PC-9 (cell line): ENCODE measurements at regions of chr1 and their contacts with region 1.

Region 1: DNA sequence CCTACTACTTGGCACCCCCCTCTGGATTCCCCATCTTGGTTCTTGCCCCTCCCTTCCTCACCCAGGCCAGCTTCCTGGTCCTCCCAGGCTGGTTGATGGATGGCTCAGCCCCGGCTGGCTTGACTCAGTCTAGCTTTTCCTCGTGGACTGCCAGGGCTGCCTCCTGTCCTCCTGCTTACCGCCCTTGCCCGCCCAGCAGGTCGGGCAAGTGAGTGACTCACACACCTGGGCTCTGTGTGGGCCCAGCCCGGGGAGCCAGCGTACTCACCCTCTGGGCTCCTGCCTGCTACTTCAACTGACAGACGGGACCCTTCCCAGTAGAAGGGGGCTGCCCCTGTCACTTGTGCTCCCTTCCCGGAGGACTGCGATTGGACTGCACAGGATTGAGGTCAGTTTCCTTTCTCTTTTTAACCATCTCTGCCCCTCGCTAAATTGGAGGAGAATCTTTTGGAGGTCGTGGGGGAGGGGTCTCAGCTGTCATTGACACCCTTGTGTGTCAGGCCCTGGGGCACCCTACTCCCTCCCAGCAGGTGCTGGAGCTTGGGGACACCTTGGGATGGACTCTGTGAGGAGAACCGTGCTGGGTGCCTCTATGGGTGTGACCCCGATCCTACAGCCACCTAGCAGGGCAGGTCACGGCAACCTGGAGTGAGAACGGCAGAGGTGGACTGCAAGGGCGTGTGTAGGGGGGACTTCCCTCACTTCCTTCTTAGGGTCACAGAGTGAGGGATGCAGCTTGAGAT is 19.3 kb upstream of the ARHGEF10L start:
- DNase-seq: peak; percentile 88 to 90
- H3K4me3 ChIP-seq: peak overlapping the region; percentile 54; the same call in 1 of the 2 replicates
- H3K27ac ChIP-seq: peak overlapping the region; percentile 62
- H3K4me1 ChIP-seq: peaks cover 43% of the 10 kb centered on the region
- H3K27me3 ChIP-seq: no peaks in the 10 kb centered on the region
- CTCF ChIP-seq: no peak

Region 2: DNA sequence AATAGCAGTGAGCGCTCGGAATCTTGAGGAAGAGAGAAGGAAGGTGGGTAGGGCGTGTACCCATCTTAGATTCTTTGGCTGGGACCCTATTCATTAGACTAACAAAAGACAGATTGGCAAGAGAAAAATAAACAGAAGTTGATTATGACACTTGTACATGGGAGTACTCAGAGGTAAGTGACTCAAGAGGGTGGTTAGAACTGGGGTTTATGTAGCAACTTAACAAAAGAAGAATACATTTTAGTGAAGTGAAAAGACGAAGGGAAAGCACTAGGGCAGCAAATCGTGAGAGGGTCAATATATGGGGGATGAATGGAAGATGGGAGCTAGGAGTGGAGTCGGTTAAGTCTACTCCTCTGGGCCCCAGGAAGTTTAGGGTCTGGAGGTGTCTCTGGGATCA is 55.0 kb before region 1 on chr1:
- CTCF ChIA-PET with region 1: no interaction called
- POLR2A ChIA-PET with region 1: no interaction called
- intact Hi-C with region 1: no loop called
- DNase-seq: no peak
- H3K4me3 ChIP-seq: no peak overlapping the region
- H3K27ac ChIP-seq: no peak overlapping the region
- H3K4me1 ChIP-seq: peaks cover 6% of the 10 kb centered on the region; the same call in 1 of the 2 replicates
- H3K27me3 ChIP-seq: no peaks in the 10 kb centered on the region
- CTCF ChIP-seq: no peak

Region 3: DNA sequence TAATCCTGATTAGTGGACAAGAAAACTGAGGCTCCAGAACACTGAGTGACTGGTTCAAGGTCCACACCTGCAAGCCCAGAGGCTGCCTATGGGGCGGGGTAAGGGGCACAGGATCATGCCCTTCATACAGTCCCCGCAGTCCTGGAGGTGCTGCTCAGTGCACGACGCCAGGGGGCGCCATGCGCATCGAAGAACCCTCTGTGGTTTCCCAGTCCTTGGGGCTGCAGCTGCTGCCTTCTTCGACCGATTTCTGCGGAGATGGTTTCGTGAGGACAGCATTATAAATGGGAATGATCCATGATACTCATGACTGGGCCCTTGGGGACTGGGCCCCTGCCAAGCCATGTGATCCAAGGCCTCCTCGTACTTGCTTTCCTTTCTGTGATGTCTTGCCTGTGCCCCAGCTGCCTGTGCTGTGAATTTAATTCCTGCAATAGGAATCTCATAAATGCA is 17.9 kb before region 1 on chr1:
- CTCF ChIA-PET with region 1: no interaction called
- POLR2A ChIA-PET with region 1: no interaction called
- intact Hi-C with region 1: no loop called
- DNase-seq: peak; percentile 54 to 79
- H3K4me3 ChIP-seq: no peak overlapping the region
- H3K27ac ChIP-seq: no peak overlapping the region
- H3K4me1 ChIP-seq: 0 out of 2 replicates have a peak, but pooled peaks cover 7% of the 10 kb centered on the region
- H3K27me3 ChIP-seq: no peaks in the 10 kb centered on the region
- CTCF ChIP-seq: peak; percentile 81

Region 4: DNA sequence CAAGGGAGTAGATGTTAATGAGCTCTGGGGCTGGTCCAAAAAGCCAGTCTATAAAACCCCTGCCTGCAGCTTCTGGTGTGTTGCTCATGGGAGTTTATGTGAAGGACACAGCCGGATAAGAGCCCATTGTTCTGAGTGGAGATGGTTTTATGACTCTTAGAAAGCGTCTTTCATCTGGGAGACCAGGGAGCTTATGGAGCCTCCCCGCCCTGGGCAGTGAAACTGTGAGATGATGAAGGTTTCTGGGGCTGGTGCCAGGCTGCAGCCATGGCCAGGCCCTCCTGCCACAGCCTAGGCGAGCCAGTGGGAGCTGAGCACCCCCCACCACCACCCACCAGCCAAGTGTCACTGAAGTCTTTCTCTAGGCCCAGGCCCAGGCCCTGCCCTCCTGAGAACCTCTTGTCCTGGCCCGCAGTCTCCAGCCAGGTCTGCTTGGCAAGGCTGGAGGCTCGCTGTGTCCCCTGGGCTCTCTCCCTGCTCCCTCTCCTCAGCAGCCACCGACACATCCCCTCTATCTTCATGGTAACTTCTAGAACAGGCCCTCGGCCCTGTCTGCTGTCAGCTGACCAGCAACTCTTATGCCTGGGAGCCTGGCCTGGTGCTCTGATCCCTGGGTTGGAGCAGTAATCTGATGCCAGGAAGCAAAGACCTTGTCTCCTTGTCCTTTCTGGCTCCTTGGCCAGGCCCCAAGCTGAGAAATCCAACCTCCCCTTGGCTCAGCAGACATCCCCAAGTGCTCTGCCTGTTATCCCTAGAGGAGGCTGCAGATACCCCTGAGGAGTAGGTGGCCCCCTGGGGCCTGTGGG is 11.6 kb after region 1 on chr1:
- CTCF ChIA-PET with region 1: no interaction called
- POLR2A ChIA-PET with region 1: no interaction called
- intact Hi-C with region 1: loop called (anchors 1 kb)
- DNase-seq: no peak
- H3K4me3 ChIP-seq: no peak overlapping the region
- H3K27ac ChIP-seq: no peak overlapping the region
- H3K4me1 ChIP-seq: peaks cover 9% of the 10 kb centered on the region
- H3K27me3 ChIP-seq: no peaks in the 10 kb centered on the region
- CTCF ChIP-seq: no peak

Region 5: GRCh38 chr1:17551755-17552234 is 31.6 kb after region 1 on chr1:
- CTCF ChIA-PET with region 1: interaction called, 3 read pairs
- POLR2A ChIA-PET with region 1: no interaction called
- intact Hi-C with region 1: loop called (anchors 1 kb)
- DNase-seq: peak in 1 of 2 experiments; percentile 63
- H3K4me3 ChIP-seq: no peak overlapping the region; the same call in 1 of the 2 replicates
- H3K27ac ChIP-seq: peak overlapping the region; percentile 95
- H3K4me1 ChIP-seq: peaks cover 56% of the 10 kb centered on the region
- H3K27me3 ChIP-seq: no peaks in the 10 kb centered on the region
- CTCF ChIP-seq: no peak

Region 6: DNA sequence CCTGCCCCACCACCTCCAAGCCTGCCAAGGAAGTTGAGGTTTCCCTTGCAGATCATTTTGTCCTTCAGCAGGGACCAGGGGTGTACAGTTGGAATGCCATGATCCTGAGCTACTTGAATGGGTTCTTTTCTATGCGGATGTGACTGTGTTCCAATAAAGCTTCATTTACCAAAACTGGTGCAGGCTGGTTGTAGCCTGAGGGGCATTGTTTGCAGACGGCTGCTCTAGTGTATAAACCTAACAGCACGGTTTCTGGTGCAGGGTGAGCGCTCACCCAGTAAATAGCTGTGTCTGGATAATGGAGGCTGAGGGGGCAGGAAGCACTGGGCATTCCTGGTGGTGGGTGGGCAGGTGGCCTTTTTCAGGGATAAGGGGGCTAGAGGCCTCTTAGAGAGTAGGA is 162.2 kb after region 1 on chr1:
- CTCF ChIA-PET with region 1: no interaction called
- POLR2A ChIA-PET with region 1: no interaction called
- intact Hi-C with region 1: no loop called
- DNase-seq: no peak
- H3K4me3 ChIP-seq: no peak overlapping the region
- H3K27ac ChIP-seq: no peak overlapping the region
- H3K4me1 ChIP-seq: no peaks in the 10 kb centered on the region
- H3K27me3 ChIP-seq: no peaks in the 10 kb centered on the region
- CTCF ChIP-seq: no peak

Region 7: DNA sequence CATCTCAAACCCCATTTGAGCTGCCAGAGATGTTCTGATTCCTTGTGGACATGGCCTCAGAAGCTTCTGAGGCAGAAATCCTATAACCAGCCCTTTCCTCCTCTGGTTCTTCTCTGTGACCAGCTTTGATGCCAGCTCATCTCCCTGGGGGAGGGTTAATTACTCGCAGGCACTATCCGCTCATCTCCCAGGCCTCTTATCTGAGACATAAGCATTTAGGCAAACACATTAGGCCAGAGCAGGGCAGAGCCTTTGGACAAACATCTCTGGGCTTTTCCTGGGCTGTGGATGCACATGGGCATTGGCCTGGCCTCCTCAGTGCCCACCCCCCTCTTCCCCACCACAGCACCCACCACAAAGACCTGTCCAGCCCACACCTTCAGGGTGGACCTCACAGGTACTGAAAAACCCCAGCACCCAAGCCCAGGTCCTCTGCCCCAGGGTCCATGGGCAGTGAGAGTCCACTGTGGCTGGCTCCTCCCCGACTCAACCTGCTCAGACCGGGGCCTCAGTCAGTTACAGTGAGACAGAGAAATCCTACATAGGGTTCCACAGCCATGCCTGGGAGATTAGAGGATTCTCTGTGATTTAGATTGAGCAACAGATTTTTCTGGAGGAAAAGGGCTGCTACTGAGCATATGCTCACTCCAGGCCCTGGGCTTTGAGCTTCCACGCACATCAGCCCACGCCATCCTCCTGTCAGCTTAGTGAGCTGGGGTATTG is 614.2 kb after region 1 on chr1:
- CTCF ChIA-PET with region 1: no interaction called
- POLR2A ChIA-PET with region 1: no interaction called
- intact Hi-C with region 1: no loop called
- DNase-seq: no peak
- H3K4me3 ChIP-seq: no peak overlapping the region
- H3K27ac ChIP-seq: no peak overlapping the region
- H3K4me1 ChIP-seq: no peaks in the 10 kb centered on the region
- H3K27me3 ChIP-seq: peaks cover 58% of the 10 kb centered on the region
- CTCF ChIP-seq: no peak